ENCODE measurements at regions of chr1 and their contacts with region 1.

Region 1: GRCh38 chr1:54800899-54801759 is at the start of gene TTC22:
- DNase-seq: peak; percentile 65 to 80
- ATAC-seq: peak; percentile 77 to 89 (median 84)
- H3K4me3 ChIP-seq: peak within 1 kb of the TSS; percentile 80
- H3K4me3 Mint-ChIP-seq: peak within 1 kb of the TSS; percentile 92
- H3K27ac ChIP-seq: peak within 1 kb of the TSS; percentile 70
- H3K27ac Mint-ChIP-seq: peak within 1 kb of the TSS; percentile 91 to 95
- H3K4me1 ChIP-seq: peaks cover 66% of the 10 kb centered on the region
- H3K4me1 Mint-ChIP-seq: peaks cover 79 to 85% of the 10 kb centered on the region in 2 donors
- H3K27me3 ChIP-seq: no peaks in the 10 kb centered on the region
- H3K27me3 Mint-ChIP-seq: no peaks in the 10 kb centered on the region
- CTCF ChIP-seq: peak; percentile 72
- total RNA-seq, gene TTC22: 17.8 to 30.8 (median 26.5) TPM

Region 2: DNA sequence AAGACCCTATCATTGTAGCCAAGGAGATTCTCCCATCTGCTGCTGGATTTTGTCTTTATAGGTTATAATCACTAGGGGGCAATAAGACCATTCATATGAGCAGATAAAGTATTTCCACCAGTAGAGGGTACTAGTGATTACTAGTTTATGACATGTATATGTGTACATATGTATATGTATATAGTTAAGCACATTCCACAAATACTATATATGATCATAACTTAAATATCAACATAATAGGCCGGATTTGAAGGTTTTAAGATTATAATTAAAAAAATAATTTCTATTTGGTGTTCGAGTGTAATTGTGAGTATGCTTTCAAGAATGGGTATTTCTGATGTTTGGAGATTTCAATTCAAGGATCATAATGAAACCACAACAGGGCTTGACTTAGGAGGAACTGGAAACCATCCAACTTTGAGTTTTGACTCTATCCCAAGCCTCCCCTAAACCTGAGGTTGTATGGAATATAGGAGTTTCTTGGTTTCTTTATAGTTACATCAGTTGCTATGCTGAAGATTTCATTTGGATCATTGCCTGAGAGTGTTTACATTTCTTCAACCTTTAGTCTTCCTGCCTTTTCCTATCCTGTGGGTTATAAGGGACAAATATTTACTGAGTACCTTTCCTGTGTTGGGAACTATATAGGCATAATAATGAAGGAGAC is 730.8 kb before region 1 on chr1:
- intact Hi-C with region 1: loop called (anchors 5 kb)
- DNase-seq: peak in 1 of 2 donors; percentile 73
- ATAC-seq: peak; percentile 91 to 100 (median 98)
- H3K4me3 ChIP-seq: no peak overlapping the region
- H3K4me3 Mint-ChIP-seq: no peak overlapping the region
- H3K27ac ChIP-seq: no peak overlapping the region
- H3K27ac Mint-ChIP-seq: no peak overlapping the region
- H3K4me1 ChIP-seq: no peaks in the 10 kb centered on the region
- H3K4me1 Mint-ChIP-seq: no peaks in the 10 kb centered on the region
- H3K27me3 ChIP-seq: no peaks in the 10 kb centered on the region
- H3K27me3 Mint-ChIP-seq: no peaks in the 10 kb centered on the region
- CTCF ChIP-seq: peak; percentile 98

Measured in natural killer cell (primary cell).